Activated CD8-positive, alpha-beta T cell treated with anti-CD3 and anti-CD28 coated beads for 36 hours (primary cell): ENCODE measurements at regions of chr9 and their contacts with region 1.

Region 1: DNA sequence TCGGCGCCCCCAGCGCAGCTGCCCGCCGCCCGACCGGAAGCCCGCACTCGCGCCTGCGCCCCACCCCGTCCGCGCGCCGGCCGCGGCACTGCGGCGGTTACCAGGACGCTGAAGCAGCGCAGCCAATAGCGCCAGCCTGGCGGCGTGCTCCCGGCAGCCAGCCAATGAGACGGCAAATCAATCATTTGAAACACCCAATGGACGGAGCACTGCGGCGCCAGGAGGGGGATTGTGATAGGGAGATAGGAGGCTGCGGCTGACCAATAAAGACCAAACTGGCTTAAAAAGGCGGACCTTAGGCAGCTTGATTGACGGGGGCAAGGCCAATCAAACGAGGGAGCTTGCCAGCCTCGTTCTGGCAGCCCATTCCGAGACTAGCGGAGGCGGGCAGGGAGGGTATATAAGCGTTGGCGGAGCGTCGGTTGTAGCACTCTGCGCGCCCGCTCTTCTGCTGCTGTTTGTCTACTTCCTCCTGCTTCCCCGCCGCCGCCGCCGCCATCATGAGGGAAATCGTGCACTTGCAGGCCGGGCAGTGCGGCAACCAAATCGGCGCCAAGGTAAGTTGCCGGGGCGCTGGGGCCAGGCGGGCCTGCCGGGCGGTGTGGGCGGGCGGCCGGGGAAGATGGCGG is at the start of gene TUBB4B:
- DNase-seq: peak; percentile 99
- ATAC-seq: peak; percentile 82
- H3K4me3 Mint-ChIP-seq: peak within 1 kb of the TSS; percentile 88
- H3K27ac Mint-ChIP-seq: peak within 1 kb of the TSS; percentile 91
- H3K4me1 Mint-ChIP-seq: peaks cover 34% of the 10 kb centered on the region
- H3K27me3 Mint-ChIP-seq: no peaks in the 10 kb centered on the region
- CTCF ChIP-seq: no peak
- total RNA-seq, gene TUBB4B: 228 to 230 TPM

Region 2: GRCh38 chr9:137070201-137070905 is 170.6 kb before region 1 on chr9 and contains the start of gene SAPCD2:
- CTCF ChIA-PET with region 1: interaction called, 10 read pairs
- POLR2A ChIA-PET with region 1: interaction called, 3 read pairs
- intact Hi-C with region 1: no loop called
- DNase-seq: peak; percentile 92
- ATAC-seq: peak; percentile 87
- H3K4me3 Mint-ChIP-seq: peak within 1 kb of the TSS; percentile 68
- H3K27ac Mint-ChIP-seq: peak within 1 kb of the TSS; percentile 62
- H3K4me1 Mint-ChIP-seq: peaks cover 7% of the 10 kb centered on the region
- H3K27me3 Mint-ChIP-seq: peaks cover 1% of the 10 kb centered on the region
- CTCF ChIP-seq: no peak
- total RNA-seq, gene SAPCD2: 13.5 to 13.7 TPM

Region 3: DNA sequence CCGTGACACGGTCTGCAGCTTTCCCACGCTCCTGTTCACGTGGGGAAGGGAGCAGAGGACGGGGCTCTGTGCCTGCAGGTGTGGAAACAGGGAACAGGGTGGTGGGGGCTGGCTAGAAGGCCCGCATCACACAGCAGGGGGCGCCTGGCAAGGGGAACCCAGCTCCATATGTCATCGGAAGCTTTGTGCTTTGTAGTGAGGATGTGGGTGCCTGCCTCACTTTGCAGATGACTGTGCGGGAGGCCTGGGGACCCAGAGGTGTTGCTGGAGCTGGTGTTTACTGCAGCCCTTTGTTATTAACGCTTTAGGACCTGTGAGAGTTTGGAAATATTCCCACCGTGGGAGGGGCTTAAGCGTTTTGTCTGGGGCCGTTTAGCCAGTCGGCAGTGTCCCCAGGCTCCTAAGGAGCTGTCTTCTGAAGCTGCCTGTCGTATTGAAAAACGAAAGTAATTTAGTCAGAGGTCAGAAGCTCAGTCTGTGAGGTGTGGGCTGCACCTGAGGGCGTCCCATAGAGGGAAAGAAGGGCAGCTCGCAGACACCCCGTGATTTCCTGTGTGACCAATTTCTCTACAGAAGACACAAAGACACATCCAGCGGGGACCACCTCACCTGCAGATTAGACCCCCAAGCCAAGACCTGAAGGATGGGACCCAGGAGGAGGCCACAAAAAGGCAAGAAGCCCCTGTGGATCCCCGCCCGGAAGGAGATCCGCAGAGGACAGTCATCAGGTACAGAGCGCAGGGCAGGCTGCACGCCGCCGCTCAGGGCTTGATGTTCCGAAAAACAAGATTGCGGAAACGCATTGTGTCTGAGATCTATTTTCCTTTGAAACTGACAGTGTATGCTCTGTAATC is 145.1 kb before region 1 on chr9:
- CTCF ChIA-PET with region 1: interaction called, 14 read pairs
- POLR2A ChIA-PET with region 1: interaction called, 3 read pairs
- intact Hi-C with region 1: no loop called
- DNase-seq: peak; percentile 95
- ATAC-seq: peak; percentile 97
- H3K4me3 Mint-ChIP-seq: peak overlapping the region; percentile 78
- H3K27ac Mint-ChIP-seq: peak overlapping the region; percentile 91
- H3K4me1 Mint-ChIP-seq: peaks cover 23% of the 10 kb centered on the region
- H3K27me3 Mint-ChIP-seq: no peaks in the 10 kb centered on the region
- CTCF ChIP-seq: peak; percentile 74

Region 4: GRCh38 chr9:137129456-137130175 is 111.4 kb before region 1 on chr9:
- CTCF ChIA-PET with region 1: interaction called, 14 read pairs
- POLR2A ChIA-PET with region 1: interaction called, 5 read pairs
- intact Hi-C with region 1: no loop called
- DNase-seq: peak; percentile 91
- ATAC-seq: peak; percentile 96
- H3K4me3 Mint-ChIP-seq: peak overlapping the region; percentile 87
- H3K27ac Mint-ChIP-seq: peak overlapping the region; percentile 68
- H3K4me1 Mint-ChIP-seq: peaks cover 17% of the 10 kb centered on the region
- H3K27me3 Mint-ChIP-seq: peaks cover 4% of the 10 kb centered on the region
- CTCF ChIP-seq: no peak

Region 5: DNA sequence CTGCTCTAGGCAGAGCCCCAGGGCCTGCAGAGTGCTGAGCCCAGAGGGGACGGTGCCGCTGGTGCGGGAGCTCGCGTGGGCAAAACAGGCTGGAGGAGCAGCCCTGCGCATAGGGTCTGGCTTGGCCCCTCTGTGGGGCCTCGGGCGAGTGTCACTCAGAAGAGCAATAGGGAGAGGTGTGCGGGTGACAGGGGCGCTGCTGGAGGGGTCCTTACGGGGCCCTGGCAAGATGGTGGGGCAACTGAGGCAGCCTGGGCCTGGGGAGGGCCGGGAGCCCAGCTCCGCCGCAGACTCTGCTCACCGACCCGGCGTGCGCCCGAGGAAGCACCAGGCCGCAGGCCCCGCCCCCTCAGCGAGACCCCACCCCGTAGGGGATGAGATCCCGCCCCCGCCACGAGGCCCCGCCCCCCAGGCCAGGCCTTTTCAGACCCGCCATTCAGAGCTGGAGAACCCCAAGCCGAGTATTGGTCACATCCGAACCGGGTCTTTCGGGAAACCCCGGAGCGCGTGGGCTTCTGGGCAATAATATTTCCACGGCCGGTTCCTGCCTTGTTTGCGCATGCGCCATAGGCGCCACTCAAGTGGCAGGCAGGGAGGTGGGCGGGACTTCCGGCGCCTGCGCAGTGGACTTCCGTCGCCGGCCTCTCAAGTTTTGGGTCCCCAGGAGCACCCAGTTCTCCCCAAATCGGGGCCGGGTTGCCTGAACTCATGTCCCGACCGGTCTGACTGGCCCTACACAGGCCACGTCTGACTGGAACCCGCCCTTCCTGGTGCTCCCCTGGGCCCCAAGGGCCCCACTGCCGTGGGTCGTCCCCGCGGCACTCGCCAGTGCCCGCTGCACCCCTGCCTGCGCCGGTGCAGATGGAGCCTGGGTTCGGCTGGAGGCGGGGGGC is 17.7 kb before region 1 on chr9:
- CTCF ChIA-PET with region 1: interaction called, 58 read pairs
- POLR2A ChIA-PET with region 1: interaction called, 16 read pairs
- intact Hi-C with region 1: no loop called
- DNase-seq: peak; percentile 99
- ATAC-seq: peak; percentile 93
- H3K4me3 Mint-ChIP-seq: peak overlapping the region; percentile 80
- H3K27ac Mint-ChIP-seq: peak overlapping the region; percentile 71
- H3K4me1 Mint-ChIP-seq: peaks cover 11% of the 10 kb centered on the region
- H3K27me3 Mint-ChIP-seq: peaks cover 1% of the 10 kb centered on the region
- CTCF ChIP-seq: no peak